ENCODE measurements at regions of chr2 and their contacts with region 1.

Region 1: DNA sequence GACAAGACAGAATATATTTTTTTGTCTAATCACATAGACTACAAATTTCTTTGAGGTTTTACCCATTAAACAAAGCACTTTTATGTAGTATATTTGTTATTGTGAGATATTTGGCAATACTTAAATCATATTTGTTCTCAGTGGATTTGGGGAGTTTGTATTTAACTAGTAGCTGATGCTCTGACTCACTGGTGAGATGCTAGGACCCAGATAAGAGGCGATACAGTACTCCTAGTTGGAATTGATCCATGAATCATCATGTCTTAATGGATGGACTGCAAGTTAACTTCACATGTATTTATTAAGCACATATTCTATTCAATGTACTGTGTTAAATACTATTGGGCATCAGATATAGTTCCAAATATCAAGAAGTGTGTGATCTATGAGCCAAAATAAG is 349.8 kb downstream of the GPD2 start:
- DNase-seq: no peak
- ATAC-seq: no peak

Region 2: DNA sequence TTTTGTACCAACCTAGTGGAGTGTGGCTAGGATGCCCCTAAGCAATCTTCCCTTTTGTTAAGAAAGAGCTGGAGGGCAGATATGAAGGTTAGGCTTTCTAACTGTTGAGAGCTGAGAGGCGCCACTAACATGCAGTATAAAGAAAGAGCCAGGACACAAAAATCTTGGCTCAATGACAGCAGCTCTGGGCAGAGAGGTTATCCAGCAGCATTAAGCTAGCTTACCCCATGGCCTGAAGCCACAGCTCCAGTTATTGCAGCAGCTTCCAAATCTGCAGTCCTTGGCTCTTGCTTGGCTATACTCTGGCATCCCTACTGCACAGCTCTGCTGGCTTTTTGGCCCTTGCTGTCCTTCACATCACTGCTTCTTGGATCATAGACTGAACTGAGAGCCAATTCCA is 136.4 kb before region 1 on chr2:
- intact Hi-C with region 1: loop called (anchors 2 kb)
- DNase-seq: peak; percentile 77
- ATAC-seq: peak; percentile 99

Region 3: DNA sequence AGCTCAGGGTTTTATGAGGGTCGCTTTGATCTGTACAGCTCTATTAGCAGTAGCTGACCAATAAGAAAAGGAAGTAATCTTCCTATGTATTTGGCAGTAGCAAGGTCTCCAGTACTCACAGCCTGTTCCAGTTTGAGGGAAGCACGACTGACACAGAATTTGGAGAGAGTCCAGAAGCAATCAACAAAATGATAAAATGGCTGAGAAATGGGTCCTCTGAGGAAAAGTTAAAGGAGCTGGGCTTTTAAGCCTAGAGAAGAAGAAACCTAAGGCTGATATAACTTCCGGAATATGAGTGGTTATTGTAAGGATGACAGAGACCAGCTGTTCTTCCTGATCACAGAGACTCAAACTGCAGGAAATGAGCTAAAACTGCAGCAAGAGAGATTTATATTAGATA is 33.0 kb after region 1 on chr2:
- intact Hi-C with region 1: no loop called
- DNase-seq: no peak
- ATAC-seq: peak; percentile 79

Region 4: DNA sequence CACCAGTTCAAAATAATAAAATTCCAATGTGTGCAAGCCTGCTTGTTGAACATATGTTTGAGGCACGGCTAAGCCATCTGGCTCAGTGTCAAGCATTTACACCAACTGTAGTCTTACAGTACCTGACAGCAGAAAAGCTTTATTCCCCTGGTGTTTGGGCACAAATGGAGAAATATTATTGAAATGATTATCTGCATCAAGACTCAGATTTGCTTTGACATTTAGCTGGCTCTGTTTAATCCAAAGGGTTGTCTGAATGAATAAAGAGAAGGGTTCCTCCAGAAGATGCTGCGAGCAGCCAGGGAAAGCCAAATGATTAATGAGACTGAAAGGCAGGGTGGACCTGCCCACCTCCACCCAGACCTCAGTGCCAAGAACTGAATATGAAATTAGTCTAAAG is 78.3 kb after region 1 on chr2:
- intact Hi-C with region 1: no loop called
- DNase-seq: no peak
- ATAC-seq: no peak

Region 5: GRCh38 chr2:157173740-157174184 is 387.8 kb after region 1 on chr2:
- intact Hi-C with region 1: no loop called
- DNase-seq: no peak
- ATAC-seq: peak; percentile 81

Measured in Right ventricle myocardium inferior (tissue), 1 donor.